ENCODE measurements at regions of chr21 and their contacts with region 1.

Region 1: GRCh38 chr21:36589355-36589971 is 109.5 kb upstream of the SIM2 start:
- H3K4me3 Mint-ChIP-seq: no peak overlapping the region
- H3K27ac Mint-ChIP-seq: no peak overlapping the region
- H3K4me1 Mint-ChIP-seq: peaks cover 5% of the 10 kb centered on the region
- H3K27me3 Mint-ChIP-seq: peaks cover 5% of the 10 kb centered on the region

Region 2: GRCh38 chr21:35476621-35477395 is 1112.7 kb before region 1 on chr21:
- intact Hi-C with region 1: no loop called
- H3K4me3 Mint-ChIP-seq: no peak overlapping the region
- H3K27ac Mint-ChIP-seq: peak overlapping the region; percentile 92
- H3K4me1 Mint-ChIP-seq: peaks cover 77% of the 10 kb centered on the region
- H3K27me3 Mint-ChIP-seq: no peaks in the 10 kb centered on the region

Region 3: DNA sequence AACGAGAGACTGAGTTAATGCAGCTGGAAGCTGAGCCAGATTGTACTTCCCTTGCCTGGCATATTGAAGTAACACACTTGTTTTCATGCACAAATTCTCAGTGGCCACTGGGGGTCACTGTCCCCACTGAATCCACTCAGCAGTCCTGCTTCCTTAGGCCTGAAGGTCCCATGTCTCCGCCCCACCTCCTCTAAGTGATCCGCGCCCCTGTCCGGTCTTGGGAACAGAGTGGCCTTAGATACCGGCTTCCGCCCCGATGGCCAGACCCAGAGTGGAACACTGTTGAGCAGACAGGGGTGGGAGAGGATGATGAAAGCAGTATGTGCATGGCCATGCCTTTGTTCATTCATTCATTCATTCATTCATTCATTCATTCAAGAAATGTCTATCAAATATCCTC is 169.5 kb before region 1 on chr21:
- intact Hi-C with region 1: loop called (anchors 2 kb)
- H3K4me3 Mint-ChIP-seq: no peak overlapping the region
- H3K27ac Mint-ChIP-seq: no peak overlapping the region
- H3K4me1 Mint-ChIP-seq: peaks cover 25% of the 10 kb centered on the region
- H3K27me3 Mint-ChIP-seq: no peaks in the 10 kb centered on the region

Region 4: DNA sequence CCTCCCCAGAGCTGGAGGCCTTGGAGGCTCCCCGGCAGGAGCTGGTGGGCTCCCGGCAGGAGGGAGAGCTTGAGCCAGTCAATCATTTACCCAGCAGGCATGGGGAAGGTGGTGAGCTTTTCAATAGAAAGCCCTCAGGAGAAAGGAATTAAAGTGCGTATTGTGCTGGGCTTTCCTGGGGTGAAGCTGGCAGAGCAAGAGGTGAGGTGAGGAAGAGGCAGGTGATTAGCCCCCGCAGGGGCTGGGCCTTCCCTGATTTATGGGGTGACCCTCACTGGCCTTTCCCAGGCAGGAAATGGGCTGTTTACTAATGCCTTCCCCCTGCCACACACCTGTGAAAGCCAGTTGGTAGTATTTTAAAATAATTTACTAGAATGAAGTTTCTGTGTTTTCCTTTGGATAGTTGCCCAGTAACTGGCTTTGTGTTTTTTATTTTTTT is 135.4 kb before region 1 on chr21:
- intact Hi-C with region 1: no loop called
- H3K4me3 Mint-ChIP-seq: no peak overlapping the region
- H3K27ac Mint-ChIP-seq: no peak overlapping the region
- H3K4me1 Mint-ChIP-seq: peaks cover 8% of the 10 kb centered on the region
- H3K27me3 Mint-ChIP-seq: peaks cover 3% of the 10 kb centered on the region

Region 5: DNA sequence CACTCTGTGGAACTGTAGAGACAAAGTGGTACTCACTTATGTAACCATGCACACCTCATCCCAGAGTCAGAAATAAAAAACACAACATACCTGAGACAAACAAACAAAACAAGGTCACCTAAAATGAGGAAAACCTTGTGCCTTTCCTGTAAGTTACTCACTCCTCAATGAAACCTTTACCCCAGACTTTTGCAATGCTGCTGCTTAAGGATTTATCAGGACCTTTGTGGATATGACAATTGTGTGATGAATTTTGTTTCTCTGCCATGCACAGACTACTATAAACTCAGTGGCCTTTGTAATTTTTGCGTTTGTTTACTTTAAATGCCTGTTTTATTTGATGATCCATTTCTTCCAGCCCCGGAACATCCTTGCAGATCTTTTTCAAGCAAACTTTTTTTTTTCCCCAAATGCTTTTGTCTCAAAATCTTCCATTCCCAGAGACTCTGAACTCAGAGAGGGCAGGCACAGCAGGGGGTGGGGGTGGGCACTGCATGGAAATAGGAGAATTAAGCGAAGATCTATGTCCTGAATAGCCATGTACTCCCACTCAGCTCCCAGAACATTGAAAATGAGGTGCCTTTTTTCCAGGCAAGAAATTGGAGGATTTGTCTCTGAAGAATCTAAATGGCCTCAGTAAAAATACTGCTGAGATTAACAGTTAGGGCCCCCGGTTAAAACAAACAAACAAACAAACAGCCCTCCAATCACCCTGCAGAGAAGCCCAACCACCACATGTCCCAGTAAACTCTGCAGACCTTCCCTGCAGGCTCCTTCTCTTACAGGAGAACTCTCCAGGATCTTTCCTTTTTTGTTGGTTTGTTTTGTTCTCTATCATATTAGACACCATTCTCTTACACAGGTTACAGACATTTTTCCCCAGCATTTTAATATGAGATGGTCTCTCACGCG is 86.8 kb after region 1 on chr21:
- intact Hi-C with region 1: loop called (anchors 10 kb)
- H3K4me3 Mint-ChIP-seq: no peak overlapping the region
- H3K27ac Mint-ChIP-seq: no peak overlapping the region
- H3K4me1 Mint-ChIP-seq: no peaks in the 10 kb centered on the region
- H3K27me3 Mint-ChIP-seq: peaks cover 40% of the 10 kb centered on the region